ENCODE measurements at regions of chr6 and their contacts with region 1.

Region 1: GRCh38 chr6:99736302-99736701 is 129.7 kb downstream of the PRDM13 start:
- DNase-seq: peak; percentile 26
- H3K4me3 Mint-ChIP-seq: no peak overlapping the region
- H3K27ac Mint-ChIP-seq: no peak overlapping the region
- H3K4me1 Mint-ChIP-seq: no peaks in the 10 kb centered on the region
- H3K27me3 Mint-ChIP-seq: peaks cover 61% of the 10 kb centered on the region
- CTCF ChIP-seq: no peak

Region 2: DNA sequence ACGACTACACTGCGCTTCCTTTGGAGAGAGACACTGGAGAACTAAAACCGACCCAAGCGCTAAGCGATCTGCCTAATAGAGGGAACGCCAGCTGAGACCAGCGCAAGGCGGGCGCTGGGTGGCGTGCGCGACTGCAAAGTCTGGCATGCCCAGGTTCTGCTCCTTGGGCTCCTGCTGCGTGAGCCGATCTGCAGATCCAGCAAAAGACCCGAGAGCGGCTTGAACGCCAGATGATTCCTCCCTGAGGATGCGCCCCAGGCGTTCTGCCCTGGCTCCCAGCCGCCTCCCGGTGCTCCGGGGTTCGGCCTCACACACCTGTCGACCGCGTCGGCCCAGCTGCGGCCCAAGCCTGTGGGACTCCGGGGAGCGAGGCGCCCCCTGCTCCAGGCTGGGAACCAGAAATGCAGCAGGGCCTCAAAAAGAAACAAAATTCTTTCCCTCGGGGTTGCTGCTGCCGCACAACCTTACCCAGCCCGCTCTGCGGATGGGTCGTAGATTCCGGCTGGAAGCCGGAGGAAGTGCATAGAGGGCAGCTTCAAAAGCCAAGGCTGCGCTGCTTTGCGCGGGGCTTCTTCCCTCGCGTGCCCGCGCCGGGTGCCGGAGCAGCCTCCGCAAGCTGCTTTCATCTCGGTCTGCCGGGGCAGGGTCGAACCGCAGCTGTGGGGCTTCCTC is 147.5 kb before region 1 on chr6:
- CTCF ChIA-PET with region 1: no interaction called
- intact Hi-C with region 1: loop called (anchors 2 kb)
- DNase-seq: peak; percentile 82
- H3K4me3 Mint-ChIP-seq: peak overlapping the region; percentile 95
- H3K27ac Mint-ChIP-seq: no peak overlapping the region
- H3K4me1 Mint-ChIP-seq: peaks cover 10% of the 10 kb centered on the region
- H3K27me3 Mint-ChIP-seq: peaks cover 49% of the 10 kb centered on the region
- CTCF ChIP-seq: no peak

Region 3: DNA sequence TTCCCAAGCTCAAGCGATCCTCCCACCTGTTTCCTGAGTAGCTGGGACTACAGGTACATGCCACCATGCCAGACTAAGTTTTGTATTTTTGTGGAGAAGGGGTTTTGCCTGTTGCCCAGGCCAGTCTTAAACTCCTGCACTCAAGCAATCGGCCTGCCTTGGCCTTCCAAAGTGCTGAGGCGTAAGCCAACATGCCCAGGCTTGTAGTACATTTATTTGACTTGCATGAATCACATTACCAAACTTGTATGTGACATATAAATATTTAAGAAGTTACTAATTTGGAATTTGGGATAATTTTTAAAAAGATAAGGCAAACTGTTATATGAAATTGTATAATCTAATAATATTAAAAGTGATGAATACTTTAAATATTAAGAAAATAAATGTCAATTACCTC is 100.2 kb after region 1 on chr6:
- CTCF ChIA-PET with region 1: no interaction called
- intact Hi-C with region 1: no loop called
- DNase-seq: no peak
- H3K4me3 Mint-ChIP-seq: no peak overlapping the region
- H3K27ac Mint-ChIP-seq: no peak overlapping the region
- H3K4me1 Mint-ChIP-seq: no peaks in the 10 kb centered on the region
- H3K27me3 Mint-ChIP-seq: peaks cover 14% of the 10 kb centered on the region
- CTCF ChIP-seq: no peak

Region 4: GRCh38 chr6:99979953-99980352 is 243.7 kb after region 1 on chr6:
- CTCF ChIA-PET with region 1: no interaction called
- intact Hi-C with region 1: no loop called
- DNase-seq: no peak
- H3K4me3 Mint-ChIP-seq: no peak overlapping the region
- H3K27ac Mint-ChIP-seq: no peak overlapping the region
- H3K4me1 Mint-ChIP-seq: no peaks in the 10 kb centered on the region
- H3K27me3 Mint-ChIP-seq: no peaks in the 10 kb centered on the region
- CTCF ChIP-seq: no peak

Region 5: DNA sequence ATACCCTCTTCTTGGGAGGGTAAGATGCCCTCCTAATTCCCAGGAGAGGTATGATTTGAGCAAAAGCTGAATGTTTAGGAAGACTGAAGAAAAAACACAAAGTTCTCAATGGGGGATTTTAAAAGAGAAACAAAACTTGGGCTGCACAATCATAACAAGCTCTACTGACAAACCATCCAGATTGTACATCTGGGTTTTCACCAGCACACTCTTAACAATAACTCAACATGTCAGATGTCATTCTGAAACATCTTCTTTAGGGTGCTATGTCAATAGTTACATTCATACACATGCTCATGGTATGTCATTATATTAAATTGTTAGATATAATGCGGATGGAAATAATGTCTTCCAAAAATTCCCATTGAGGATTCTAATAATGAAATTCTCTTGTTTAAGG is 1049.7 kb after region 1 on chr6:
- CTCF ChIA-PET with region 1: no interaction called
- intact Hi-C with region 1: no loop called
- DNase-seq: no peak
- H3K4me3 Mint-ChIP-seq: no peak overlapping the region
- H3K27ac Mint-ChIP-seq: no peak overlapping the region
- H3K4me1 Mint-ChIP-seq: no peaks in the 10 kb centered on the region
- H3K27me3 Mint-ChIP-seq: no peaks in the 10 kb centered on the region
- CTCF ChIP-seq: no peak